ENCODE measurements at regions of chr17 and their contacts with region 1.

Region 1: GRCh38 chr17:68398691-68399637 is 58.3 kb downstream of the WIPI1 start:
- DNase-seq: peak; percentile 50 to 59
- ATAC-seq: peak; percentile 52 to 86 (median 69)
- H3K4me3 ChIP-seq: no peak overlapping the region
- H3K27ac ChIP-seq: peak overlapping the region in 6 of 10 donors; percentile 3 to 50 (median 41)
- H3K4me1 ChIP-seq: peaks cover 0 to 35% (median 18%) of the 10 kb centered on the region in 9 donors
- H3K27me3 ChIP-seq: no peaks in the 10 kb centered on the region
- CTCF ChIP-seq: peak; percentile 52 to 87 (median 75)

Region 2: GRCh38 chr17:68152161-68152571 is 246.8 kb before region 1 on chr17:
- intact Hi-C with region 1: no loop called
- DNase-seq: peak in 1 of 2 donors; percentile 24
- ATAC-seq: peak in 7 of 8 donors; percentile 37 to 89 (median 62)
- H3K4me3 ChIP-seq: no peak overlapping the region
- H3K27ac ChIP-seq: no peak overlapping the region
- H3K4me1 ChIP-seq: no peaks in the 10 kb centered on the region
- H3K27me3 ChIP-seq: no peaks in the 10 kb centered on the region
- CTCF ChIP-seq: no peak

Region 3: DNA sequence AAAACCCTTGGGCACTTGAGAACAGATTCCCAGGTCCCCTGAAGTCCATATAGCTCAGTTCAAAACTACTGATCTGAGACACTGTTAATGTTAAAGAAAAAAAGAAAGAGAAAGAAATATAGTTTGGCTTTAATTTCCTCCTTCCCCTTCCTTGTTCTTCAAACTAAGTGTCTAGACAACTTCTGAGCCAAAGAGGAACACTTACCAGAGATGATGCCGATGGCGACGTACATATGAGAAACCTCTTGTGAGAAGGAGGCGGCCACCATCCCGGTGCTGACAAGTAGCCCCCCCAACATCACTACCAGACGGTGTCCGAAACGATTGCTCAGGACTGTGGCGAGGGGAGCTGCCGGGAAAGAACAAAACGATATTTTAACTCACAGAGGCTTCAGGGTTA is 125.2 kb before region 1 on chr17:
- intact Hi-C with region 1: loop called in 2 of 10 experiments (anchors 10 kb)
- DNase-seq: no peak
- ATAC-seq: no peak
- H3K4me3 ChIP-seq: no peak overlapping the region
- H3K27ac ChIP-seq: peak overlapping the region in 1 of 10 donors; percentile 57
- H3K4me1 ChIP-seq: no peaks in the 10 kb centered on the region
- H3K27me3 ChIP-seq: no peaks in the 10 kb centered on the region
- CTCF ChIP-seq: no peak

Region 4: DNA sequence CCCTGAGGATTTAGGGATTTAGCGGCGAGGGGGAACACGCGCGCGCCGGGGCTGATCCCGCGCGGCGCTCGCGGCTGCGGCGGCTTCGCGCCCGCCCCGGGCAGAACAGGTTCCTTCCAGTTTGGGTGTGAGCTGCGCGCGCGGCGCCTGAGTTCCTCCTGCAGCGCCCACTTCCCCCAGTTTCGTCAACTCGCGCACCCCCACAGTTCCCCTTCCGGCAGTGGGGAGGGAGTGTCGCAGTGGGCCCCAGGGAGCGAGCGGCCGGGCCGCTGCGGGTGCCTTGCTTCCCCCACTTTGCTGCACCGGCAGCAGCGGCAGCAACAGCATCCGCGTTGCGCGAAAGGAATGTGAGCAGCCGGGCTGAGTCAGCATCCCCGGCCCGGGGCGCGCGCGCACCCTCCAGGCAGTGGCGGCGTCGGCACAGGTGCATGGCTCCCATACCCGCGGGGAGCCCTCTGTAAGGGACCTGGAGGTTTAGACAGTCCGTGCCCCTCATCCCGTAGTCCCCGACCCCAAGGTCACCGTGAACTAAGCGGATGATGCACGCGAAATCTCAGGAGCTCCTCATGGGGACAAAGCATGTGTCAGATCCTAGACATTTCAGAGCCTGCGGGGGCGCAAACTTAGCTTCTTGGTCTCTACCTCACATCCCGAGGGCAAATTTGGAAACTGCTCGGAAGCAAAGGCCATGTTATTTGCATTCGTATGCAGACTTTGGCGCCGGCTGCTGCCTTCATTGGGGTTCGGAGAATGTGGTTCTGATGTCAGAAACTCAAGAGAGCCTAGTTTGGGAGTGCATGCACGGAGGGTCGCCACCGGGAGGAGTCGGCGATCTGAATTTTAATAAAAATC is 106.9 kb before region 1 on chr17:
- intact Hi-C with region 1: loop called in 1 of 10 experiments (anchors 10 kb)
- DNase-seq: peak; percentile 75 to 77
- ATAC-seq: peak; percentile 72 to 85 (median 81)
- H3K4me3 ChIP-seq: peak overlapping the region; percentile 44 to 85 (median 72)
- H3K27ac ChIP-seq: peak overlapping the region in 9 of 10 donors; percentile 34 to 98 (median 81)
- H3K4me1 ChIP-seq: peaks cover 4 to 67% (median 20%) of the 10 kb centered on the region in 9 donors
- H3K27me3 ChIP-seq: peaks cover 0 to 34% (median 14%) of the 10 kb centered on the region in 7 donors
- CTCF ChIP-seq: peak in 2 of 9 donors; percentile 6 to 8

Region 5: DNA sequence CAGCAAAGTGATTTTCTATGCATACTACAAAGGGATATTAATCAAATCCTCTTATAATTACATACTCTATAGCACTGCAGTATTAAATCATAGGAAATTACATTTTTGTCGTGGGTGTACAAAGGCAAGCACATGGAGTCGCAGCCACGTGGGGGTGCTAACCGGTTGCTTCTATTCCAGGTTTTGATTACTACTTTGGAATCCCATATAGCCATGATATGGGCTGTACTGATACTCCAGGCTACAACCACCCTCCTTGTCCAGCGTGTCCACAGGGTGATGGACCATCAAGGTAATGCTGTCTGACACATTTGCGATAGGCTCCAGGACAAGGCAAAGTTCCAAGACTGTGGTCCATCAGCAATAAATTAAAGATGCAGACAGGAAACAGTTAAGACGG is 47.6 kb before region 1 on chr17:
- intact Hi-C with region 1: loop called in 1 of 10 experiments (anchors 5 kb)
- DNase-seq: peak in 1 of 2 donors; percentile 24
- ATAC-seq: peak in 3 of 8 donors; percentile 34 to 63 (median 42)
- H3K4me3 ChIP-seq: no peak overlapping the region
- H3K27ac ChIP-seq: no peak overlapping the region
- H3K4me1 ChIP-seq: peaks cover 0 to 76% (median 0%) of the 10 kb centered on the region in 9 donors
- H3K27me3 ChIP-seq: no peaks in the 10 kb centered on the region
- CTCF ChIP-seq: peak in 7 of 9 donors; percentile 16 to 58 (median 38)

Region 6: GRCh38 chr17:68365469-68365868 is 33.5 kb before region 1 on chr17:
- intact Hi-C with region 1: no loop called
- DNase-seq: no peak
- ATAC-seq: no peak
- H3K4me3 ChIP-seq: no peak overlapping the region
- H3K27ac ChIP-seq: no peak overlapping the region
- H3K4me1 ChIP-seq: no peaks in the 10 kb centered on the region
- H3K27me3 ChIP-seq: no peaks in the 10 kb centered on the region
- CTCF ChIP-seq: no peak

Region 7: GRCh38 chr17:68580236-68580770 is 181.3 kb after region 1 on chr17:
- intact Hi-C with region 1: no loop called
- DNase-seq: no peak
- ATAC-seq: peak in 6 of 8 donors; percentile 38 to 85 (median 52)
- H3K4me3 ChIP-seq: no peak overlapping the region
- H3K27ac ChIP-seq: peak overlapping the region in 6 of 10 donors; percentile 3 to 89 (median 27)
- H3K4me1 ChIP-seq: peaks cover 0 to 66% (median 4%) of the 10 kb centered on the region in 9 donors
- H3K27me3 ChIP-seq: no peaks in the 10 kb centered on the region
- CTCF ChIP-seq: no peak